Gastrocnemius medialis (tissue), 4 donors: ENCODE measurements at regions of chr6 and their contacts with region 1.

Region 1: DNA sequence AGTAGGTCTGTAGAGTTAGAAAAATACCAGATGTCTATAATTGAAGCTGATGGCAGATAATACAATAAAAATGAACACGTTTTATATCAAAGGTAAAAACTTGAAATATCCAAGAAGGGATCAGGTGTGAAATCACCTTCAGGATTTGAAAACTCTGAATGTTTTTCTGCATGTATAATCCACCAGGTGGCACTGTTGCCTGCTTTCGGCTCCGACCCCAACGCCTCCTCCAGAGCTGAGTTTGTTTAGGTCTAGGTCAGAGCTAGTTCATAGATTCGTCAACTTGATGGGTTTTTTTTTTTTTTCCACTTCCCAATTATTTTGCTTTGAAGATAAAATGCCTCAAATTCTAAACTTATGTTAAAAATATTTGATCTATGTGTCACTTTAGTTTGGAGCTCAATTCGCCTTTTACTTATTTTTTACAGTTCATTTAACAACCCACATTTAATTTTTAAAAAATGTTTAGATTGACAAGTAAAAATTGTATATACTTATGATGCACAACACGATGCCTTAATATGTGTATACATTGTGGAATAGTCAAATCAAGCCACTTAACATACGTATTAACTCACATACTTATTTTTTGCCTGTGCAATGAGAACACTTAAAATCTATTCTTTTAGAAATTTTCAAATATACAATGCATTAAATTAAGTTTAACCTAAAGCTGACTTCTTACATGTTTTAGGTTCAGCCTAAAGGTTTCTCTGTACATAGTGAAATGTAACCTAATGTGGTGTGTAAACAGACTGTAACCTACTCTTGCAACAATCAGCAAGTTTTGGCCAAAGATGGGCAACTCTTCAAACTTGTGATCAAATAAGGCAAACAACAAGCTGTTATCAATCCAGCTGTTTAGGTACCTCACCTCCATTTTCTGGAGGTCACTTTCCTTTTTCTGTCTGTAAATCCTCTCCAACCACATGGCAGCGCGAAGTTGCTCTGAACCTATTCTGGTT is 39.4 kb upstream of the ENPP4 start:
- DNase-seq: peak; percentile 44 to 52
- ATAC-seq: peak; percentile 81 to 87
- H3K4me3 ChIP-seq: no peak overlapping the region
- H3K27ac ChIP-seq: no peak overlapping the region
- H3K4me1 ChIP-seq: peaks cover 0 to 3% of the 10 kb centered on the region in 2 donors
- H3K27me3 ChIP-seq: no peaks in the 10 kb centered on the region
- CTCF ChIP-seq: peak; percentile 68 to 88 (median 80)
- POLR2A ChIP-seq: no peak

Region 2: DNA sequence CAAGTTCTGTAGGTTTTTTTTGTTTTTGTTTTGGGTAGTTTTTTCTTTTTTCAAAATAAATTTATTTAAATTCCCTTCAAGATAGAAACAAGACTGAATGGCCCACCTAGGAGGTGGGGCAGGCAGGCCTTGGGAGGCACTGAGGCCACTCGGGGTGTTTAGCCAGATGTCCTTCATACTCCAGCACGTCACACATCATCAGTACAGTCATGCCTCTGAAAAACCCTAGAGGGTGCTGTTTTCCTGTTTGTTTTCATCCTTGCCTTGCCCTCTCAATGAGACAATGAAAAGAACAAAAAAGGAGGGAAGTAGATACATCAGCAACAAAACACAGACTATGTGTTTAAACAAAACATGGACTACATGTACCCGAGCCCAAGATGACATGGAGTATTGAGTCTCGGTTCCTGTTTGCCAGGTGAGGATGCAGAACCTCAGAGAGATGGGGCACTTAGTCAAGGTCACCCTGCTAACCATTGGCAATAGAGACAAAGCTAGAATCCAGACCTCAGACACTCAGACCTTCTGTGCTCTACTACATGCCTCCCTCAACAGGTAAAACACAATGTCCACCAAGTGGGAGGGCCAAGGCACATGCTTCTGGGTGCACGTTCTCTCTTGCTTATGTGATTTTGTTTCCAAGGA is 47.9 kb before region 1 on chr6:
- in situ Hi-C with region 1: no loop called
- intact Hi-C with region 1: loop called (anchors 1 kb)
- DNase-seq: peak in 1 of 2 donors; percentile 32
- ATAC-seq: peak; percentile 61 to 65
- H3K4me3 ChIP-seq: no peak overlapping the region
- H3K27ac ChIP-seq: peak overlapping the region in 3 of 4 donors; percentile 4 to 22 (median 4)
- H3K4me1 ChIP-seq: peaks cover 40 to 46% of the 10 kb centered on the region in 2 donors
- H3K27me3 ChIP-seq: no peaks in the 10 kb centered on the region
- CTCF ChIP-seq: peak; percentile 50 to 74 (median 68)
- POLR2A ChIP-seq: no peak

Region 3: DNA sequence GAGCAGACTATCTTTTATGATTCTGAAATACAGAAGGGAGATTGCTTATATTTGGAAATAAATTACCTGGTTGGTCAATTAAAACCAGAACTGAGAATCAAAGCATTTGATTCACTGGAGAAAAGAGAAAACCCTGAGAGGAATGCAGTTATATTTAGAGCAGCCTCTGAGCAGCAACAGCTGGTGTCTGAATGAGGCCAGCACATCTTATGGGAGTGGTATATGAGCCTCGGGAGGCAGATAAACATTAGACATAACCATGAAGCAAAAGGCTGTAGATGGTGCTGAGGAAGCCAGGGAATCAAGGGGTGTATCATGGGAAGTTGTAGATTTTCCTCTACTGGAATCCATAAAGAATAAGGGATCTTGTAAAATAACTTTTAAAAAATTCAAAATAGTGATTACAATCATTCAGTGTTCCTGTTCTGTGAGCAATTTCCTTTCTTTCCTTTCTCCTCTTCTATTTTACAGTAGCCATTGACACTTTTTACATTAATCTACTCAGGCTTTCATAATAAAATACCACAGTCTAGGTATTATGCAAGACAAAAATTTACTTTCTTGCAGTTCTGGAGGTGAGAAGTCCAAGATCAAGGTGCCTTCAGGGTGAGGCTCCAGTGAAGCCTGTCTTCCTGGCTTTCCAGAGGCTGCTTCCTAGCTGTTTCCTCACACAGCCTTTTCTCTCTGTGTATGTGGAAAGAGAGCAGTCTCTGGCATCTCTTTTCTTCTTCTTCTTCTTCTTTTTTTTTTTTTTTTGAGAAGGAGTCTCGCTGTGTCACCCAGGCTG is 113.2 kb after region 1 on chr6:
- in situ Hi-C with region 1: loop called in 3 of 4 experiments (anchors 10 kb)
- intact Hi-C with region 1: loop called (anchors 1 kb)
- DNase-seq: no peak
- ATAC-seq: peak in 1 of 2 donors; percentile 44
- H3K4me3 ChIP-seq: no peak overlapping the region
- H3K27ac ChIP-seq: peak overlapping the region in 1 of 4 donors; percentile 57
- H3K4me1 ChIP-seq: peaks cover 0 to 18% of the 10 kb centered on the region in 2 donors
- H3K27me3 ChIP-seq: no peaks in the 10 kb centered on the region
- CTCF ChIP-seq: no peak
- POLR2A ChIP-seq: no peak

Region 4: GRCh38 chr6:46410334-46410953 is 320.0 kb after region 1 on chr6:
- in situ Hi-C with region 1: loop called (anchors 5 to 10 kb)
- intact Hi-C with region 1: no loop called
- DNase-seq: peak in 1 of 2 donors; percentile 28
- ATAC-seq: peak in 1 of 2 donors; percentile 51
- H3K4me3 ChIP-seq: no peak overlapping the region
- H3K27ac ChIP-seq: peak overlapping the region in 3 of 4 donors; percentile 12 to 34 (median 25)
- H3K4me1 ChIP-seq: peaks cover 36 to 63% of the 10 kb centered on the region in 2 donors
- H3K27me3 ChIP-seq: no peaks in the 10 kb centered on the region
- CTCF ChIP-seq: peak; percentile 44 to 94 (median 79)
- POLR2A ChIP-seq: no peak

Region 5: GRCh38 chr6:46491628-46492547 is 401.5 kb after region 1 on chr6:
- in situ Hi-C with region 1: no loop called
- intact Hi-C with region 1: loop called (anchors 10 kb)
- DNase-seq: peak; percentile 26 to 64
- ATAC-seq: peak; percentile 72 to 73
- H3K4me3 ChIP-seq: peak overlapping the region; percentile 73 to 90 (median 78)
- H3K27ac ChIP-seq: peak overlapping the region; percentile 83 to 95 (median 89)
- H3K4me1 ChIP-seq: peaks cover 19 to 35% of the 10 kb centered on the region in 2 donors
- H3K27me3 ChIP-seq: no peaks in the 10 kb centered on the region
- CTCF ChIP-seq: peak; percentile 77 to 93 (median 84)
- POLR2A ChIP-seq: no peak

Region 6: GRCh38 chr6:46626228-46626909 is 536.0 kb after region 1 on chr6:
- in situ Hi-C with region 1: loop called in 2 of 4 experiments (anchors 25 kb)
- intact Hi-C with region 1: loop called (anchors 2 kb)
- DNase-seq: no peak
- ATAC-seq: peak; percentile 62 to 73
- H3K4me3 ChIP-seq: no peak overlapping the region
- H3K27ac ChIP-seq: no peak overlapping the region
- H3K4me1 ChIP-seq: peaks cover 6% of the 10 kb centered on the region in 2 donors
- H3K27me3 ChIP-seq: no peaks in the 10 kb centered on the region
- CTCF ChIP-seq: peak; percentile 53 to 75 (median 63)
- POLR2A ChIP-seq: no peak

Region 7: GRCh38 chr6:46781478-46782378 is 691.3 kb after region 1 on chr6:
- in situ Hi-C with region 1: no loop called
- intact Hi-C with region 1: loop called (anchors 10 kb)
- DNase-seq: peak in 1 of 2 donors; percentile 18
- ATAC-seq: no peak
- H3K4me3 ChIP-seq: no peak overlapping the region
- H3K27ac ChIP-seq: no peak overlapping the region
- H3K4me1 ChIP-seq: no peaks in the 10 kb centered on the region
- H3K27me3 ChIP-seq: no peaks in the 10 kb centered on the region
- CTCF ChIP-seq: peak in 4 of 5 experiments; percentile 33 to 63 (median 42)
- POLR2A ChIP-seq: no peak